ENCODE measurements at regions of chr2 and their contacts with region 1.

Region 1: GRCh38 chr2:143397884-143398614 is 268.8 kb downstream of the ARHGAP15 start:
- DNase-seq: no peak
- H3K4me3 ChIP-seq: no peak overlapping the region
- H3K4me3 Mint-ChIP-seq: no peak overlapping the region
- H3K27ac ChIP-seq: no peak overlapping the region
- H3K27ac Mint-ChIP-seq: peak overlapping the region in 4 of 7 donors; percentile 3 to 77 (median 27)
- H3K4me1 ChIP-seq: peaks cover 27% of the 10 kb centered on the region
- H3K4me1 Mint-ChIP-seq: peaks cover 41 to 85% (median 61%) of the 10 kb centered on the region in 4 donors
- H3K27me3 ChIP-seq: no peaks in the 10 kb centered on the region
- H3K27me3 Mint-ChIP-seq: no peaks in the 10 kb centered on the region

Region 2: DNA sequence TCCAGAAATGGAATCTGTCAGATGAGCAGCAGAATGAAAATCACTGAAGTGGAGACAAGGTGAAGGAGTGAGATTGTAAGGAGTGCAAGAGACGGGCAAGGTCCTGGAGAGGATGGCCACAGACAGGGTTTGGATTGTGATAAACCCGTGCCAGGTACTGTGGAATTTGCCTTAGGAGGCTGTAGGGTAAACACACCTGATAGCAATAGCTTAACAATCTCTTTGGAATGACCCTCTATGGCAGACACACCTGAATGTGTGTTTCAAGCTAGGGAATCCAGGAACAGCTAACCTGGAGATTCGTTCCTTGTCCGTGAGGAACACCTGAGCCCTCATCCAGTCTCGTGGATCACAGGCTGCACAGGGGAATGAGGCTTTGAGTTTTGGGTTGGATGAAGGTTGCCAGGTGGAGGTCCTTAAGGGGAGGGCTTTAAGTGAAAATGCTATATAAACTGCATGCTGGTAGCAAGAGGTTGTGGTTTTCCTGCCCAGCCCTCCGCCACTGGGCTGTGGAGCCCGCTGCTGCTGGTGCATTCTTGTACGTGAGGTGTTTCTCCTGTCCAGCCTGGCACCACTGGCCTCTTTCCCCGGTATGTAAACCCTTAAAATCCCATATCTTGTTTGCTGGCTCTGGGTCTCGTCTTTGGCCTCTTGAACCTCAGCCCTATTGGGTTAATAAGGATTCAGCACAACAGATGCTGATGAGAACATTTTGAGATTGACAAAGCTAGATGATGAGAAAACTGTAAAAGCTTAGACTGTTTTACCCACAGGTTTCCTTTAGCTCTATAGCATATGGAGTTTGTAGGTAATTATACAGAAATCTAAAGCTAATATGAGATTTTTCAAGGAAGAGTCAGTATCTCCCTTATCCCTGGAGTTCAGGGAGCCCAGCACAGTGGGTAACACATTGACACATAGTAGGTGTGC is 151.0 kb before region 1 on chr2:
- CTCF ChIA-PET with region 1: no interaction called
- POLR2A ChIA-PET with region 1: no interaction called
- intact Hi-C with region 1: no loop called
- DNase-seq: peak; percentile 44 to 59 (median 45)
- H3K4me3 ChIP-seq: peak overlapping the region; percentile 71 to 74
- H3K4me3 Mint-ChIP-seq: no peak overlapping the region
- H3K27ac ChIP-seq: peak overlapping the region; percentile 43
- H3K27ac Mint-ChIP-seq: peak overlapping the region in 1 of 7 donors; percentile 97
- H3K4me1 ChIP-seq: peaks cover 71% of the 10 kb centered on the region
- H3K4me1 Mint-ChIP-seq: peaks cover 20 to 31% (median 24%) of the 10 kb centered on the region in 4 donors
- H3K27me3 ChIP-seq: no peaks in the 10 kb centered on the region
- H3K27me3 Mint-ChIP-seq: no peaks in the 10 kb centered on the region

Region 3: DNA sequence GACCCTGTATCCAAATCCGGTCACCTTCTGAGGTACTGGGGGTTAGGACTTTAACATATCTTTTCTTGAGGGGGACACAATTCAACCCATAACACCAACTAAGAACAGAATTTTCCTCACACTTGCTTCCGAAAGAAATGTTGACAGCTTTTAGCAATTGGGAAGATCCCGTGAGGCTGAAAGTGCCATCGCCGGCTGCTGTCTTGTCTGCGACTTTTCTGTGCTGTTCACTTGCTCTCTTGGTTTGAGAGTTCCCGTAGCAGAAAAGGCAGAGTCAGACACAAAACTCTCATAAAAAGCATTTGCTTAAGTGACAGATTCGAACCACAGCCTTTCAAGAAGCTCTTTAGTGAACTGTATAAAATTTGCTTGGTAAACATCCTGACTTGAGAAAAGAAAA is 15.5 kb before region 1 on chr2:
- CTCF ChIA-PET with region 1: no interaction called
- POLR2A ChIA-PET with region 1: interaction called, 7 read pairs
- intact Hi-C with region 1: loop called (anchors 2 kb)
- DNase-seq: no peak
- H3K4me3 ChIP-seq: no peak overlapping the region
- H3K4me3 Mint-ChIP-seq: no peak overlapping the region
- H3K27ac ChIP-seq: no peak overlapping the region
- H3K27ac Mint-ChIP-seq: peak overlapping the region in 1 of 7 donors; percentile 17
- H3K4me1 ChIP-seq: peaks cover 7% of the 10 kb centered on the region
- H3K4me1 Mint-ChIP-seq: peaks cover 33 to 82% (median 56%) of the 10 kb centered on the region in 4 donors
- H3K27me3 ChIP-seq: no peaks in the 10 kb centered on the region
- H3K27me3 Mint-ChIP-seq: no peaks in the 10 kb centered on the region

Region 4: DNA sequence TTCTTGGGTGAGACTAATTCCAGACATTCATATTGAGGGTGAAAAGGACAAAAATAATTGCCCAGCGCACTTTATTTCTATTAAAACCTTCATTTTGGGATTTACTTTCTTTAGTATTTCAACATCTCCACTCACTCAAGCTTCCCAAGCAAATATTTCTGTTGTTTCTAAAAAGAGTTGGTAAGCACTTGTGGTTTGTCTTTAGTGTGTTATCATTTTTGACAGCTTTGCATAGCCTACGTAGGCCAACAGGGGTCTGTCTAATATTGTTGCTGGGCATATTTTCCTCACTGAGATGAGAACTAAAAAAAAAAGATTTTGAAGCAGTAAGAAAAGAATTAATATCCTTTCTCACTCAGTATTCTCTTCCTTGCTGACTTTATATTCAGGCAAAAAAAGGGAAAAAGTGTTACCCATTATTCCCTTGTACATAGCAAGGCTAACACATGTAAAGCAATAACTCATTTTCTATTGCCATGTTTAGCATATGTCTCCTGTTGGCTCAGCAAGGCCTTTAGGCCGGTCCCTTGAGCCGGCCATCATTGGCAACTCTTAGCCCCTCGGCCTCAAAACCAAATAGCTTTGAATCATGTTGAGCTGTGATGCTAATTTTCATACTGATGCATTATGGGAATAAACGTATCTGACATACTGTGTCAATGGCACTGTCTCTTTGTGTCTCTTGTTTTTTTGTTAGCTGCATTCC is 225.3 kb after region 1 on chr2:
- CTCF ChIA-PET with region 1: no interaction called
- POLR2A ChIA-PET with region 1: no interaction called
- intact Hi-C with region 1: no loop called
- DNase-seq: no peak
- H3K4me3 ChIP-seq: no peak overlapping the region
- H3K4me3 Mint-ChIP-seq: peak overlapping the region in 1 of 8 donors; percentile 13
- H3K27ac ChIP-seq: no peak overlapping the region
- H3K27ac Mint-ChIP-seq: peak overlapping the region in 2 of 7 donors; percentile 47 to 77
- H3K4me1 ChIP-seq: no peaks in the 10 kb centered on the region
- H3K4me1 Mint-ChIP-seq: peaks cover 8 to 26% (median 12%) of the 10 kb centered on the region in 4 donors
- H3K27me3 ChIP-seq: no peaks in the 10 kb centered on the region
- H3K27me3 Mint-ChIP-seq: no peaks in the 10 kb centered on the region

Measured in CD4-positive, alpha-beta memory T cell (primary cell).